Heart right ventricle (tissue), 16 donors: ENCODE measurements at regions of chr19 and their contacts with region 1.

Region 1: DNA sequence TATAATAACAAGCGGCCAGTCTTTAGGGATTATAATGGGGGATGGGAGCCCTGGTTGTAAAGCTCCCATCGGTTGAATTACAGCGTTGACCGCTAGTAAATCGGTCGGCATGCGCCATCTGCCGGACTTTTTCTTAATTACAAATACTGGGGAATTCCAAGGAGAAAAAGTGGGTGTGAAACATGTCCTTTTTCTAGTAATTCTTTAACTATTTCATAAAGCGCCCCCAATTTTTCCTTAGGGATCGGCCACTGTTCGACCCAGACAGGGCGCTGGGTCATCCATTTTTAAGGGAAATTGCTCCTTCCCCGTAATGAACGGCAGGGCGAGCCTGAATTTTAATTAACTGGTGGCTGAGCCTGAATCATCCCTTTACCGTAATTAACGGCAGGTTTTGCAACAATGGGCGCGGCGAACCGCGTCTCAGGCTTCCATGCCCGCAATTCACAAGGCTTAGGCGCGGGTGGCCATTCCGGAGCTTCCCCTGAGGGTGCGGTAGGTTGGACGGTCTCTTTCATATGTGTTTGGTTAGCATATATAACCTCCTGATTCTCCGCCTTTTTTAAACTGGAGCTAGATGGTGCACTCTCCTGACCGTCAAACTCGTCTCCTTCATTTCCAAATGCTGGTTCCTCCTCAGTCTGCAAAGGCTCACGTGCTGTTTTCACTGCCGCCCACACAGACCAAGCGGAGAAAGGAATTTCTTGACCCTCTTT is 30.2 kb upstream of the EVI5L start:
- DNase-seq: peak; percentile 36 to 73
- ATAC-seq: peak in 7 of 8 donors; percentile 38 to 87 (median 77)
- H3K4me3 ChIP-seq: peak overlapping the region in 6 of 10 donors; percentile 4 to 40 (median 12)
- H3K27ac ChIP-seq: peak overlapping the region in 1 of 10 donors; percentile 60
- H3K4me1 ChIP-seq: peaks cover 0 to 16% (median 0%) of the 10 kb centered on the region in 9 donors
- H3K27me3 ChIP-seq: peaks cover 0 to 52% (median 34%) of the 10 kb centered on the region in 7 donors
- CTCF ChIP-seq: peak; percentile 15 to 71 (median 55)

Region 2: DNA sequence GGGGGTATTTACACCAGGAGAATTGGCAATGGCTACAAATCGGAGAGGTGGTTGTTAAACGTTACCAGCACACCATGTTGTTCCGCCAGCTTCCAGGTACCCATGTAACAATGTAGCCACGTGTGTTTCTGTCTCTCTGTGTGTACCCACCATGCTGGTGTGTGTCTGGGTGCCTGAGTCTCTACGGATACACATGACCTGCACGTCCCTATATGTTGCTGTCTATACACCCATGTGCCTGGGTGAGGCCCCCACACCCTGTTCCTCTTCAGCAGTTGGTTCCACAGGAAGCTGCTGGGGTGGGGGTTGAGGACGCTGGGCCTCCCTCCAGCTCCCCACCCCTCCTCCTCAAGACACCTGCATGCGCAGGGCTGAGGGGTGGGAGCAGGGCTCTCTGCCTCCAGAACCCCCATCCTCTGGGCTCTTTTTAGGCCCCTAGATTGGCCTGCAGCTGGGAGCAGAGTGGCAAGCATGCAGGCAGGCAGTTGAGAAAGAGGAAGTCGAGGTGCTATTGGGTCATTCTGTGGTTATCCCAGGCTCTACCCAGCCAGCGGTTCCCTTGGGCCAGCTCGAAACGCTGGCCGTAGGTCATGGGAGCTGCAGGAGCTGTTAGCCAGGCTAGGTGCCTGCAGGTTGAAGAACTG is 451.1 kb before region 1 on chr19 and contains the start of gene ARHGEF18:
- intact Hi-C with region 1: loop called in 3 of 10 experiments (anchors 5 to 10 kb)
- DNase-seq: no peak
- ATAC-seq: peak in 7 of 8 donors; percentile 39 to 63 (median 56)
- H3K4me3 ChIP-seq: peak within 1 kb of the TSS in 2 of 10 donors; percentile 3 to 56
- H3K27ac ChIP-seq: peak within 1 kb of the TSS in 1 of 10 donors; percentile 86
- H3K4me1 ChIP-seq: peaks cover 0 to 50% (median 0%) of the 10 kb centered on the region in 9 donors
- H3K27me3 ChIP-seq: peaks cover 0 to 17% (median 0%) of the 10 kb centered on the region in 7 donors
- CTCF ChIP-seq: no peak
- total RNA-seq, gene ARHGEF18: 4.8 to 13.3 (median 8.7) TPM

Region 3: DNA sequence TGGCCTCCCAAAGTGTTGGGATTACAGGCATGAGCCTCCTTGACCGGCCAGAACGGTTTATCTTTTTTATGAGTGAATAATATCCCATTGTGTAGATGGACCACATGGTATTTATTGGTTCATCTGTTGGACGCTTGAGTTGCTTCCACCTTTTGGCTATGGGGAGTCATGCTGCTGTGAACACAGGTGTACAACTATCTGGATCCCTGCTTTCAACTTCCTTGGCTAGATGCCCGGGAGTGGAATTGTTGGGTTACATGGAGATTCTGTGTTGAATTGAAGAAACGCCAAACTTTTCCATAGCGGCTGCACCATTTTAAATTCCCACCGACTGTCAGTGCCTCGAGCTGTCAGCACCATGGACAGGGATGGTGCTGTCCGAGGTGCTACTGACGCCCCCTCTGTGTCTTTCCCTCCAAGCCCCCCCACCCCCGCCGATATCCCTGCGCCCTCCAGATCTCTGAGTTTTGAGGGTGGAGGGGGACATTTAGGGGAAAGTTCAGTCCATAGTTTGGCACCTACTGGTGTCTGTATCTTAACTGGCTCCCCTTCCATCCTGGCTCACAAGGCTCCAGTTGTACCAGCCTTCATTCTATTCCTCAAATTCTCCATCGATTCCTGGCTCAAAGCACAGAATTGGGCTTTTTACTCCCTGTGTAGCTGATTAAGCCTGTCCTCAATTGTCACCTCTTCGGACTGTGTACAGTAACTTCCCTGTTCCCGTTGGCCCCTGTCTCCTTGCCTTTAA is 237.0 kb before region 1 on chr19:
- intact Hi-C with region 1: loop called in 7 of 10 experiments (anchors 2 to 10 kb)
- DNase-seq: no peak
- ATAC-seq: no peak
- H3K4me3 ChIP-seq: no peak overlapping the region
- H3K27ac ChIP-seq: no peak overlapping the region
- H3K4me1 ChIP-seq: no peaks in the 10 kb centered on the region
- H3K27me3 ChIP-seq: no peaks in the 10 kb centered on the region
- CTCF ChIP-seq: no peak

Region 4: DNA sequence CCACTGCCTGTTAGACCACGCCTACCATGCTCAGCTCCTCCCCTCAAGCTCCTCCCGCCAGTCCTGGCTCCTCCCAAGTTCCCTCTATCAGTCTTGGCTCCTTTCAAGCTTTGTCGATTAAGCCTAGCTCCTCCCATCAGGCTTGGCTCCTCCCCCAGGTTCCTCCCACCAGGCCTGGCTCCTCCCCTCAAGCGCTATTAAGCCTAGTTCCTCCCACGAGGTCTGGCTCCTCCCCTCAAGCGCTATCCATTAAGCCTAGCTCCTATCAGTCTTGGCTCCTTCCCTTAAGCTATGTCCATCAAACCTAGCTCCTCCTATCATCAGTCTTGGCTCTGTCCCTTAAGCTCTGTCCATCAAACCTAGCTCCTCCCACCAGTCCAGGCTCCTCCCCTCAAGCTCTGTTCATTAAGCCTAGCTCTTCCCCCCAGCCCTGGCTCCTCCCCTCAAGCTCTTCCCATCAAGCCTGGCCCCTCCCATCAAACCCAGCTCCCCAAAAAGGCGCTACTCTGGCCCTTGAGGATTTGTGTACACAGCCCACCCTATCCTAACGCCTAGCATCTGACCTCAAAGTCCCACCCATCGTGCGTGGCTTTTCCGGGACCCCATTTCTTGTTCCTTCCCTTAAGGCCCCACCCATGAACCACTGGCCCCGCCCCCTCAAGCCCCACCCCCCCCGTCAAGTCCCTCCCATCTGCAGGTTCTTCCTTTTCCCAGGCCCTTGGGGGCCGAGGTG is 194.1 kb before region 1 on chr19:
- intact Hi-C with region 1: no loop called
- DNase-seq: no peak
- ATAC-seq: no peak
- H3K4me3 ChIP-seq: no peak overlapping the region
- H3K27ac ChIP-seq: no peak overlapping the region
- H3K4me1 ChIP-seq: no peaks in the 10 kb centered on the region
- H3K27me3 ChIP-seq: peaks cover 0 to 51% (median 31%) of the 10 kb centered on the region in 7 donors
- CTCF ChIP-seq: no peak

Region 5: DNA sequence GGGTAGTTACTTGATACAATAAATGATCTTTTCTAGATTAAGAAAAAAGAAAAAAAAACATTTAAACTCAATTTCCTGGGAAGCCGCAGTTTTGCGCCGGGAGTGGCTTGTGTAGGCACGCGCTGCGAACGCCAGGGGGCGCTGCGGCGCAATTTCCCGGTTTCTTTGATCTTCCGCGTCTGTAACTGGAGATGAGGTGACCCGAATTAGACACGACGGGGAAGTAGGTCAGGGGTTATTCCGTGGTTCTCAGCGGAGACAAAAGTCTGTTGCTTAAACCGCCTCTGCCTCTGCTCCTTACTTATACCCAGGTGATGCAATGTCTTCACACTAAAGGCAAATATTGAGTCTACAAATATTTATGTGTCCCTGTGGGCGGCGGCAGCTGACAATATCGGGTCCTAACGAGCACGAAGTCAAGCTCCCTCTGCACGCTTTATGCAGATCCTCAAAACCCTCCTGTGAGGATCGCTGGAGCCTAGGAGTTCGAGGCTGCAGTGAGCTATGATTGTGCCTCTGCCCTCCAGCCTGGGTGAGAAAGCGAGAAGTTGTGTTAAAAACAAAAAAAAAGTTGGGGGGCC is 147.6 kb before region 1 on chr19:
- intact Hi-C with region 1: loop called in 8 of 10 experiments (anchors 2 to 10 kb)
- DNase-seq: peak; percentile 72 to 85
- ATAC-seq: peak; percentile 78 to 92 (median 90)
- H3K4me3 ChIP-seq: peak overlapping the region in 8 of 10 donors; percentile 8 to 47 (median 30)
- H3K27ac ChIP-seq: peak overlapping the region in 2 of 10 donors; percentile 35 to 74
- H3K4me1 ChIP-seq: peaks cover 0 to 23% (median 0%) of the 10 kb centered on the region in 9 donors
- H3K27me3 ChIP-seq: peaks cover 0 to 24% (median under 1%) of the 10 kb centered on the region in 7 donors
- CTCF ChIP-seq: peak; percentile 93 to 99 (median 98)

Region 6: DNA sequence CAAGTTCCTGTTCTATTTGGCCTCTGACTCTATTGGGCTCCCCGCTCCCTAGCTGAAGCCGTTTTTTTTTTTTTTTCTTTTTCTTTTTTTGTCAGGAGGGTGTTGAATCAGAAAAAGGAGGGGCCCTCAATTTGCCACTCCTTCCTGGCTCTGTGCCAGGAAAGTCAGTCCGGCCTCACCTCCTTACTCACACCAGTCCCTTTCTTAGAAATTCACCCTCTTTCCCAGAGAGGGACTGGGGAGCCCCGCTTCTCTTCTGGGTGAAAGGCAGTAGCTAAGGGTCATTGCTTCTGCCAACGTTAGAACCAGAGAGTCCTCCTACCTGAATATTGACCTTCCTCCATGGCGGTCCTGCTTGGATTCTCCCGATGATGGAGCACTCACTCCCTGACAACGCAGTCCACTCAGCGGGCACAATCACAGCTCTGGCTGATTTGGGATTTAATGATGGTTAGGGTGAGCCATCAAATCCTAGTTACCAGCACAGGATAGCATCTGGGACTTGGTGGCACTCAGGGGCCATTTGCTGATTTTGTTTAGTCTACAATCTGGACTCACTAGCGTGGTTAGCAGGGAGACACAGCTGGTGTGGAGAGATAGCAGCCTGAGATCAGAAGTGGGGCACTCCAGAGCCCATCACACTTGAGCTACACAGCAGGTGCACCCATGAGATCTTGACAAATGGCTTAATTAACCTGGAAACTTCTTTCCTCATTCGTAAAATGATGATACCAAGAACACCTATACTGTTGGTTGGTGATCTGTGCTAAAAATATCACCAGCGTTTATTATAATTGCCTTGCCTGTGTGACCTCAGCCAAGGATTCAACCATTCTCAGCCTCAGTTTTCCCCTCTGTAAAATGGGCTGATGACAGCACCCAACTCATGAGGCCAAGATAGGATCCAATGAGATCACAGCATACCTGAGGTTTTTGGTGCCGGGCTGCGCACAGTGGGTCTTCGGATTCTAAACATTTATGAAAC is 100.1 kb before region 1 on chr19:
- intact Hi-C with region 1: loop called in 1 of 10 experiments (anchors 10 kb)
- DNase-seq: no peak
- ATAC-seq: no peak
- H3K4me3 ChIP-seq: no peak overlapping the region
- H3K27ac ChIP-seq: no peak overlapping the region
- H3K4me1 ChIP-seq: peaks cover 0 to 8% (median 0%) of the 10 kb centered on the region in 9 donors
- H3K27me3 ChIP-seq: peaks cover 4 to 87% (median 50%) of the 10 kb centered on the region in 7 donors
- CTCF ChIP-seq: no peak